Right ventricle myocardium superior (tissue), 1 donor: ENCODE measurements at regions of chr2 and their contacts with region 1.

Region 1: GRCh38 chr2:27489498-27490397 is at the start of gene IFT172:
- DNase-seq: peak; percentile 99
- ATAC-seq: peak; percentile 99
- total RNA-seq, gene IFT172: 20.3 TPM

Region 2: DNA sequence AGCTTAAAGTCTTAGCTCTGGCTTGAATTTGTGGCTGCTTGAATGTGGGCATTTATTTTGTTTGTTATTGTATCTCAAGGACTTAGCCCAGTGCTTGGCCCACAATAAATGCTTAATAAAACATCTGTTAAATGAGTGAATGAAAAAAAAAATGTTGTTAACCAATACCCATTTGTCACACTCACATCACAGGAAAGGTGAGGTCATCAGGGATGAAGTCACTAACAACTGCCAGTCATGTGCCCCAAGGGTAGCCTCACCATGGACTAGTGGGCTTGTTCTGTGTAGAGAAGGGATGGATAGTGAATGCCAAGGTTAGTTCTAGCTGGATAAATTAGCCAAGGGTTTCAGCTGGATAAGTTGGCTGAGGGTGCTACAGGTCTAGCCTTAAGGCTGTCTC is 58.4 kb before region 1 on chr2:
- intact Hi-C with region 1: loop called (anchors 5 kb)
- DNase-seq: no peak
- ATAC-seq: no peak

Region 3: GRCh38 chr2:27628767-27629709 is 139.3 kb after region 1 on chr2 and contains the starts of genes CCDC121 and GPN1:
- intact Hi-C with region 1: loop called (anchors 10 kb)
- DNase-seq: peak; percentile 92
- ATAC-seq: peak; percentile 98
- total RNA-seq, gene CCDC121: 6.1 TPM
- total RNA-seq, gene GPN1: 18.0 TPM